ENCODE measurements at regions of chr15 and their contacts with region 1.

Region 1: GRCh38 chr15:90994417-90995311 is at the start of gene PRC1:
- DNase-seq: peak; percentile 95
- ATAC-seq: peak; percentile 96
- H3K4me3 Mint-ChIP-seq: peak within 1 kb of the TSS; percentile 99
- H3K27ac Mint-ChIP-seq: peak within 1 kb of the TSS; percentile 96
- H3K4me1 Mint-ChIP-seq: peaks cover 23% of the 10 kb centered on the region
- H3K27me3 Mint-ChIP-seq: no peaks in the 10 kb centered on the region
- CTCF ChIP-seq: no peak
- total RNA-seq, gene PRC1: 8.1 and 9.3 TPM in 2 replicates

Region 2: DNA sequence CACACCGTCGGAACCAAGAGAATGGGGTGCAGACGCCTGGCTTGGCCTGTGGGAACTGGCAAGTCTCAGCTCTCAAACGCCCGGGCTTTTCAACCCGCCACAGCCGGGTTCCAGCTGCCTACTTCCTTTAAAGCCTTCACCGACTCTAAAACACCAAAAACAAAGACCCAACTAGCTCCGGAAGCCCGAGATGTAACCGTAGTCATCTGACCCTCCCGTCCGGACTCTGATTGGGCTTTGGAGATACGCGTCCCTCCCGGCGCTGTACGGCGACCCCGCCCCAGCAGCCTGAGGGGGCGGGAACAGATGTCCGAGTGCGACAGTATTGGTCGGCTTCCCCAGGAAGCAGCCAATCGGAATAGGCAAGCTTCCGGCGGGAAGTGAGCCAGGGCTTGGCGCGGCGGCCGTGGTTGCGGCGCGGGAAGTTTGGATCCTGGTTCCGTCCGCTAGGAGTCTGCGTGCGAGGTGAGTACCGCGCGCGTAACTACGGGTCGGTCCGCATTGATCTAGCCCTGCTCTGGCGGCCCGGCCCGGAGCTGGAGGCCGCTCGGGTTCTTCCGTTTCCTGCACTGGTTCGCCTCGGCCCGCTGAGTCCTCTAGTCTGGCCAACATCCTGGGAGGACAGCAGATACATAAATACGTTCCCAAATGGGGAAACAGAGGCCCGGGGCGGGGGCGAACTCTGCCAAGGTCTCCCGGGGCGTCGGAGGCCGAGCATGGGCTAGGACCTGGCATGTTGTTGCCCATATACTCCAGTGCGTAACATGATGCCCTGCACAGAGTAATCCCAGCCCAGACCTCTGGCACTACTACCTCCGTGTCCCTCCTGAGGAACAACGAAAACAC is 277.5 kb before region 1 on chr15 and contains the start of gene BLM:
- CTCF ChIA-PET with region 1: no interaction called
- POLR2A ChIA-PET with region 1: no interaction called
- intact Hi-C with region 1: loop called (anchors 1 kb)
- DNase-seq: peak; percentile 87
- ATAC-seq: peak; percentile 99
- H3K4me3 Mint-ChIP-seq: peak within 1 kb of the TSS; percentile 96
- H3K27ac Mint-ChIP-seq: peak within 1 kb of the TSS; percentile 94
- H3K4me1 Mint-ChIP-seq: peaks cover 30% of the 10 kb centered on the region
- H3K27me3 Mint-ChIP-seq: no peaks in the 10 kb centered on the region
- CTCF ChIP-seq: no peak
- total RNA-seq, gene BLM: 18.2 and 23.4 TPM in 2 replicates

Region 3: GRCh38 chr15:91022075-91022835 is 27.6 kb after region 1 on chr15 and contains the start of gene VPS33B:
- CTCF ChIA-PET with region 1: no interaction called
- POLR2A ChIA-PET with region 1: interaction called, 5 read pairs
- intact Hi-C with region 1: loop called (anchors 1 kb)
- DNase-seq: peak; percentile 63
- ATAC-seq: peak; percentile 83
- H3K4me3 Mint-ChIP-seq: peak within 1 kb of the TSS; percentile 99
- H3K27ac Mint-ChIP-seq: peak within 1 kb of the TSS; percentile 89
- H3K4me1 Mint-ChIP-seq: peaks cover 35% of the 10 kb centered on the region
- H3K27me3 Mint-ChIP-seq: no peaks in the 10 kb centered on the region
- CTCF ChIP-seq: no peak
- total RNA-seq, gene VPS33B: 27.3 and 33.4 TPM in 2 replicates